ENCODE measurements at regions of chr22 and their contacts with region 1.

Region 1: DNA sequence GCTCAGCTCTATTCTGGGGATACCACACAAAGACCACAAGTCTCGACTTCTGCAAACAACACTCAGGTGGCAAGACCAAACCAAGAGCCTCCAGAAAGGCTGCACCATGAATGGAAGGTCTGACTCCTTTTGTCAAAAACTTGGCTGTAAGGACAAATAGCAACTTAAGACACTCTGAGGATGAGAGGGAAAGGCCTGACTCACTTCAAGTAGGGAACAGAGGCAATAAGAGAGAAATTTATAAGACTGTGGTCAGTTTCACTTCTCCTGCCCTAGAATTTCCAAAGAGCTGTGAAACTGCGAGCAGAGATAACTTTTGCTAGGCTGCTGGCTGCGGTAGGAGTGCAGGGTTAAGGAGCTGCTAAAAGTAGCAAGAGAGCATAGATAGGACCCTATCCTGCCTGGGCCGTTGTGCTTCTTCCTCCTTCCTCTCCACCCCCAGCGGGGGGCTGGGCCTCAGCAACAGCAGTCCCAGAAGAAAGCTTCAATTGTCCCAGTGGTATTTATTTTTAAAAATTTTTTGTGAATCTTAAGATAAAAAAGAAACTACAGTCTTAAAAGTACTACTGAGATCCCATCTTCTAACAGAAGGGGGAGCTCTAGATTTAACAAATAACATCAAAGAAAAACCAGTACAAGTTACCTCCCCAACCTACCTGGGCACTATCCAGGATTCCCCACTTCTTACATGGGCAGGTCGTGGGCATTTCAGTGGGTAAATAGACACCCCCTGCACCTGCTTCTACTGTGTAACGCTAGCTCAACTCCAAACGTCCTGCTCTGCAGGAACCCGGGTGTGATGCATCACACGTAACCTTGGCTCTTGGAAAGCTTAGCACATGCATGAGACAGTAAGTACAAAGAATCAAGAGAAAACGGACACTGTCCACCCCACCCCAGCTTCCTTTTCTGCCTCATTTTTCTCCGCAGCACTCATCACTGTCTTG is 66.4 kb downstream of the SGSM3 start:
- DNase-seq: peak; percentile 66
- ATAC-seq: peak; percentile 54
- H3K4me3 ChIP-seq: no peak overlapping the region
- H3K27ac ChIP-seq: no peak overlapping the region
- H3K4me1 ChIP-seq: no peaks in the 10 kb centered on the region; the same call in 1 of the 2 replicates
- H3K27me3 ChIP-seq: no peaks in the 10 kb centered on the region
- CTCF ChIP-seq: peak; percentile 67

Region 2: GRCh38 chr22:40312050-40312449 is 124.7 kb before region 1 on chr22:
- CTCF ChIA-PET with region 1: no interaction called
- POLR2A ChIA-PET with region 1: no interaction called
- intact Hi-C with region 1: no loop called
- DNase-seq: no peak
- ATAC-seq: no peak
- H3K4me3 ChIP-seq: no peak overlapping the region
- H3K27ac ChIP-seq: no peak overlapping the region
- H3K4me1 ChIP-seq: no peaks in the 10 kb centered on the region
- H3K27me3 ChIP-seq: no peaks in the 10 kb centered on the region
- CTCF ChIP-seq: no peak

Region 3: DNA sequence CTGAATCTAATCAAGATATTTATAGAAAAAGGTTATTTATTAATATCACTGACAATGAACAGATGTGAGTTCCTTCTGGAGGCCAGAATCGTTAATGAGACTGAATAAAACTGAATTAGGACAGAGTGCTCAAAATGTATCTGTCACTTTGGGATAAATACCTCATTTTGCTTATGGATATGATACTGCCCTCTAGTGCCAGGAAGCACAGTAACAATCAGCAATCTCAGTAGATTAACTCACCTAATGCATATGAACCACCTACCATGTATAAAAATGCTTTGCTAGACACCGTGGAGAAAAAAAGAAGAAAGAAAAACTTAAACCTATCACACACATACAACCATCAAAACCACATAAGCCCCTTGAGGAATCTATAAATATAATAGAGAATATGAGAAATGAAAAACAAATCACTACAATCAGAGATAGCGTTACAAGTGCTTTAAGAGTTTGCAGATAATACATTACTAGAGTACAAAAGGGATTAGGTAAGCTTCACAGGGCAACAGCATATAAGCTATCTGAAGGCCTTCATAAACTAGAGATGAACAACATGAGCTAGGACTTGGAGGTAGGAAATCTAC is 51.0 kb after region 1 on chr22:
- CTCF ChIA-PET with region 1: interaction called, 3 read pairs
- POLR2A ChIA-PET with region 1: no interaction called
- intact Hi-C with region 1: loop called (anchors 2 kb)
- DNase-seq: peak; percentile 41
- ATAC-seq: peak; percentile 48; the same call in 1 of the 2 replicates
- H3K4me3 ChIP-seq: no peak overlapping the region
- H3K27ac ChIP-seq: no peak overlapping the region
- H3K4me1 ChIP-seq: no peaks in the 10 kb centered on the region; the same call in 1 of the 2 replicates
- H3K27me3 ChIP-seq: no peaks in the 10 kb centered on the region
- CTCF ChIP-seq: peak; percentile 81

Region 4: DNA sequence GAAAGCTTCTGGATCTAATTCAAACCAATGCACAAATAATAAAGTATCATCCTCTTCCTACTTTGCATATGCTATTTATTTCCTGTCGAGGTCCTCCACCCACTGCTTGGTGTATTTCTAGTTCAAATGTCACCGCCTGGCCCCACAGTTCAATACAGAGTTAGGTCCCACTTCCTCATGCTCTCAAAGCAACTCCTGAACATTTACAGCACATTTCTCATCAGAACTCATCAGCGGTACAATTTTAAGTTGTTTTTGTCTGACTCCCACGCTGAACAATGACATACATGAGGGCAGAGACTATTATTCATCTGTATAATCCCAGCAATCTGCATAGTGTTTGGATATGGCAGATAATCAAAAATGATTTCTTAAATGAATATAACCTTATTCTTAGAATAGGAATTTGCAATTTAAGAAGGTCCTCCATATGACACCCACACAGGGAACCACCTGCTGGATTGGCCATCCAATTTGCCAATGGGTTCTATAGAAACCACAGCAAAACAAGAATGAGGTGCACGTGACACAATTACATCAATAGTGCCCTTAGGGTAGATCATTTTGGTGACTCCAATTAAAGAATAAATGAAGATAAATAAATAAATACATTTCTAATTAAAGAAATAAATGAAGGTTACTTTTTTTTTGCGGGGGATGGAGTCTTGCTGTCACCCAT is 328.1 kb after region 1 on chr22:
- CTCF ChIA-PET with region 1: no interaction called
- POLR2A ChIA-PET with region 1: no interaction called
- intact Hi-C with region 1: loop called (anchors 2 kb)
- DNase-seq: no peak
- ATAC-seq: no peak
- H3K4me3 ChIP-seq: no peak overlapping the region
- H3K27ac ChIP-seq: no peak overlapping the region
- H3K4me1 ChIP-seq: no peaks in the 10 kb centered on the region
- H3K27me3 ChIP-seq: no peaks in the 10 kb centered on the region
- CTCF ChIP-seq: no peak